ENCODE measurements at regions of chr4 and their contacts with region 1.

Region 1: DNA sequence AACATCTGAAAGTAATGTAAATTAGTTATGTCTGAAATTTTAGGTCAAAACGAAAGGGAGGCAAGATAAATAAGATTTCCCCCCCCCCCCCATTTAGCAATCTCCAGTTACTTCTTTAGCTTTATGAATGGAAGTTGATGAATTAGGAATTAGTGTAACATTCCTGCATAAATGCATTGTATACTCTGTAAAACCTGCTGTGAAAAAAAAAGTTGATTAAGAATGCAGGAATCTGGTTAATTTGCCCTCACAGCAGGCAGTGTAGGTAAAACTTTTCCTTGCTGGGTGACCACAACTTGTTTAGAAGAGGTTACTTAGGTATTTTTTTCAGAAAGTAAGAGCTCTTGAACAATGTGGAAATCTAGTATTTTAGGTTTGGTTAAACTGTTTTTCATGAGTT is 15.3 kb downstream of the LARP7 start:
- DNase-seq: no peak
- H3K4me3 ChIP-seq: no peak overlapping the region
- H3K27ac ChIP-seq: no peak overlapping the region
- H3K4me1 ChIP-seq: no peaks in the 10 kb centered on the region
- H3K27me3 ChIP-seq: no peaks in the 10 kb centered on the region
- CTCF ChIP-seq: no peak

Region 2: DNA sequence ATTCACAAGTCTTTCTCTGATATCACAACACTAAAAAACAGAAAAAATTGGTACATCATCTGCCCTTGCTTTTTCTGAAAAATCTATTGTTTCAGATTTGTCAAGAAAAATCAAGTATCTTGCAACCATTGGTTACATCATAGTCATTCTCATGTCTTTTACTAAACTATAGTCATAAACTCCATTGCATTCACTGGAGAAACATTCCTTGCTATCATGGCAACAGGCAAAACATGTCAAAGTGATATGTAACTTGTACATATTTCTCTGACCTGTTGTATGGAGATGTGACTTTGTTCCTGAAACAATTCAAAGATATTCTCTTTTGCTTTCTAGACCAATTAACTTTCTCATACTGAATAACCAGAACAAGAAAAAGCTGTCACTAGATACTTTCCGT is 275.3 kb after region 1 on chr4:
- CTCF ChIA-PET with region 1: interaction called, 14 read pairs
- POLR2A ChIA-PET with region 1: no interaction called
- intact Hi-C with region 1: no loop called
- DNase-seq: no peak
- H3K4me3 ChIP-seq: no peak overlapping the region
- H3K27ac ChIP-seq: no peak overlapping the region
- H3K4me1 ChIP-seq: no peaks in the 10 kb centered on the region
- H3K27me3 ChIP-seq: no peaks in the 10 kb centered on the region
- CTCF ChIP-seq: no peak

Measured in PC-9 (cell line).